ENCODE measurements at regions of chr17 and their contacts with region 1.

Region 1: GRCh38 chr17:28763804-28764266 is 20.0 kb downstream of the TRAF4 start:
- DNase-seq: peak in 1 of 2 experiments; percentile 84
- H3K4me3 ChIP-seq: no peak overlapping the region
- H3K27ac ChIP-seq: no peak overlapping the region
- H3K4me1 ChIP-seq: peaks cover 9 to 25% (median 18%) of the 10 kb centered on the region in 4 experiments
- H3K27me3 ChIP-seq: no peaks in the 10 kb centered on the region
- CTCF ChIP-seq: peak in 2 of 3 experiments; percentile 62 to 81; a peak in 3 of 4 replicates
- EP300 ChIP-seq: no peak
- POLR2A ChIP-seq: no peak
- RAD21 ChIP-seq: peak; percentile 63 to 72

Region 2: GRCh38 chr17:28693869-28694268 is 70.0 kb before region 1 on chr17:
- CTCF ChIA-PET with region 1: no interaction called
- POLR2A ChIA-PET with region 1: no interaction called
- DNase-seq: no peak
- H3K4me3 ChIP-seq: no peak overlapping the region
- H3K27ac ChIP-seq: no peak overlapping the region
- H3K4me1 ChIP-seq: no peaks in the 10 kb centered on the region
- H3K27me3 ChIP-seq: no peaks in the 10 kb centered on the region
- CTCF ChIP-seq: no peak
- EP300 ChIP-seq: no peak
- POLR2A ChIP-seq: no peak
- RAD21 ChIP-seq: no peak

Region 3: DNA sequence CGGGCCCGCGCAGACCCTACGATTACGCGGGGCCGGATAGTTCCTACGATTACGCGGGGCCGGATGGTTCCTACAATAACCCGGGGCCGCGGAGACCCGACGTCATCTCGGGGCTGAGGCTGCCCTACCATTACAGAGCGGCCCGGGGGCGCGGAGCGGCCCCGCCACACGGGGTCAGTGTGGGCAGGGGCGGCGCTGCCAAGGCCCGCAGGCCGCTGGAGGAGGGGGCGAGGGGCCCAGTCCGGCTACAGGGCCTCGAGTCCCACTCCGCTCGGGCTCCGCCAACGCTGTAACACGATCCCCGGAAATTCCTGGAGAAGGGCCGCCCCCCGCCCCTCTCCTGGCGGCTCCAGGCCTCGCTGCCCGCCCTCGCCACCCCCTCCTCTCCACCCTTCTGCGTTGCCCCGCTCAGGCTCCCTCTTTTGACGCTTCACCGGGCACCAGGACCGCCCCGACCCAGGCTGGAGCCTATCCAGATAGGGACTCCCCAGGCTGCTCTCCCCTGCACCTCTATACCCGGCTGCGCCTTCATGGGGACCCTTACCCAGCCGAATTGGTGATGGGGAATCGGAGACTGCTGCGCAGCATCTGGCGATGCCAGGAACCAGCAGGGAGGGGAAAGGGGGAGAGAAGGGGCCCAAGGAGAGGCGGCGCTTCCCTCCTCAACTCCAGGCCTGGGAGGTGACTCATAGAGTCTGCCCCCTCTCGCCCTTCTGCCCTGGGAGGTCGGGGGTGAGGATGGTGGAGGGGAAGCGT is 46.1 kb before region 1 on chr17 and contains the start of gene RAB34:
- CTCF ChIA-PET with region 1: interaction called, 3 read pairs
- POLR2A ChIA-PET with region 1: interaction called, 10 read pairs
- DNase-seq: peak; percentile 80 to 92
- H3K4me3 ChIP-seq: peak within 1 kb of the TSS; percentile 95 to 100 (median 98)
- H3K27ac ChIP-seq: peak within 1 kb of the TSS; percentile 77
- H3K4me1 ChIP-seq: peaks cover 4 to 14% (median 8%) of the 10 kb centered on the region in 4 experiments
- H3K27me3 ChIP-seq: no peaks in the 10 kb centered on the region
- CTCF ChIP-seq: peak; percentile 42 to 63 (median 61)
- EP300 ChIP-seq: peak in 1 of 2 experiments; percentile 18; a peak in 1 of 3 replicates
- POLR2A ChIP-seq: peak; percentile 48 to 78
- RAD21 ChIP-seq: peak in 1 of 2 experiments; percentile 12; a peak in 1 of 4 replicates
- total RNA-seq, gene RAB34: 236 and 237 TPM in 2 replicates

Region 4: DNA sequence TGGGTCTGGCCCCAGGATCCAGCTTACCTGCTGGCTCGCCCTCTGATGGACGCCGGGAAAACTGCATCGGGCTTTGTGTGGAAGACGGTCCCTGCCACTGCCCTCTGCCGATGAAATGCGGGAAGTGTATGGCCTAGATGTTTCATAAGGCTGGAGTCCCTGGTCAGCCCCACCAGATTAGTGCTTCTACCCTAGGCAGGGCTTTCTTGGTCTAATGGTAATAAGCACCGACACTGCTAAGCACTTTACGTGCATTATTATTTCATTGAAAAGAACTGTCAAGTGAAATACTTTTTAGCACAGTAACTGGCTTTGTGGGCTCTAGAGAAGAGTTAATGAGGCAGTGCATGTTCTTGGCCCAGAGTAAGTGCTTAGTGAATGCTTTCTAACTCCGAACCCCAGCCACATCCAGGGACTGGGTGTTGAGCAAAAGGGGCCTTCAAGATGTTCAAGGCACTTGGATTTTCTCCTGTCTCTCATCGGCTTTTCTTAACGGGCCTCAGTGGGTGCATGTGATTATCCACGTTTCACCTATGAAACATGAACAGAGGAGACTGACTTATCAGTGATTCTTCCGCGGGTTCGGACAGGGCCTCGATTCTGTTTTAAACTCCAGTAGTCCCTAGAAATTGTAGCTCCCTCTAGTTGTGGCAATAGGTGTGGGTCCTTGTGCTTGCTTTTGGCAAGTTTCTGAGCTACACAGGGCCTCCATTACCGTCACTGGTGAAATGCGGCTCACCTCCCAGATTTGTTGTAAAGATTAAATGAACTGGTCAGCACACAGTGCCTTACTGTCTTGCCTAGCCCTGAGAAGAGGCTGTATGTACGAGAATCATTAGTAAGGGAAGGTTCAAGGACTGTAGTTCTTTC is 13.4 kb before region 1 on chr17:
- CTCF ChIA-PET with region 1: interaction called, 134 read pairs
- POLR2A ChIA-PET with region 1: interaction called, 240 read pairs
- DNase-seq: peak in 1 of 2 experiments; percentile 96
- H3K4me3 ChIP-seq: no peak overlapping the region
- H3K27ac ChIP-seq: no peak overlapping the region
- H3K4me1 ChIP-seq: peaks cover 0 to 30% (median 24%) of the 10 kb centered on the region in 4 experiments; a peak in 6 of 7 replicates
- H3K27me3 ChIP-seq: no peaks in the 10 kb centered on the region
- CTCF ChIP-seq: peak; percentile 98 to 100 (median 100)
- EP300 ChIP-seq: 0 out of 3 replicates have a peak, but pooled peaks of 1 of the 2 experiments have one; percentile 5
- POLR2A ChIP-seq: peak in 1 of 2 experiments; percentile 73; a peak in 2 of 3 replicates
- RAD21 ChIP-seq: peak; percentile 71 to 81

Region 5: GRCh38 chr17:28792877-28793661 is 29.2 kb after region 1 on chr17:
- CTCF ChIA-PET with region 1: interaction called, 13 read pairs
- POLR2A ChIA-PET with region 1: interaction called, 3 read pairs
- DNase-seq: no peak
- H3K4me3 ChIP-seq: no peak overlapping the region
- H3K27ac ChIP-seq: no peak overlapping the region
- H3K4me1 ChIP-seq: no peaks in the 10 kb centered on the region
- H3K27me3 ChIP-seq: no peaks in the 10 kb centered on the region
- CTCF ChIP-seq: no peak
- EP300 ChIP-seq: no peak
- POLR2A ChIP-seq: no peak
- RAD21 ChIP-seq: no peak

Region 6: GRCh38 chr17:28842282-28843012 is 78.6 kb after region 1 on chr17 and contains the start of gene FAM222B:
- CTCF ChIA-PET with region 1: interaction called, 32 read pairs
- POLR2A ChIA-PET with region 1: interaction called, 9 read pairs
- DNase-seq: peak; percentile 54 to 92
- H3K4me3 ChIP-seq: peak within 1 kb of the TSS; percentile 85 to 98 (median 92)
- H3K27ac ChIP-seq: peak within 1 kb of the TSS; percentile 18; the same call in 1 of the 2 replicates
- H3K4me1 ChIP-seq: peaks cover 0 to 1% (median 0%) of the 10 kb centered on the region in 4 experiments; a peak in 1 of 7 replicates
- H3K27me3 ChIP-seq: no peaks in the 10 kb centered on the region
- CTCF ChIP-seq: no peak; a peak in 1 of 4 replicates
- EP300 ChIP-seq: no peak
- POLR2A ChIP-seq: peak in 1 of 2 experiments; percentile 50; a peak in 1 of 3 replicates
- RAD21 ChIP-seq: 0 out of 4 replicates have a peak, but pooled peaks of 1 of the 2 experiments have one; percentile 7
- total RNA-seq, gene FAM222B: 81.7 and 86.6 TPM in 2 replicates

Region 7: DNA sequence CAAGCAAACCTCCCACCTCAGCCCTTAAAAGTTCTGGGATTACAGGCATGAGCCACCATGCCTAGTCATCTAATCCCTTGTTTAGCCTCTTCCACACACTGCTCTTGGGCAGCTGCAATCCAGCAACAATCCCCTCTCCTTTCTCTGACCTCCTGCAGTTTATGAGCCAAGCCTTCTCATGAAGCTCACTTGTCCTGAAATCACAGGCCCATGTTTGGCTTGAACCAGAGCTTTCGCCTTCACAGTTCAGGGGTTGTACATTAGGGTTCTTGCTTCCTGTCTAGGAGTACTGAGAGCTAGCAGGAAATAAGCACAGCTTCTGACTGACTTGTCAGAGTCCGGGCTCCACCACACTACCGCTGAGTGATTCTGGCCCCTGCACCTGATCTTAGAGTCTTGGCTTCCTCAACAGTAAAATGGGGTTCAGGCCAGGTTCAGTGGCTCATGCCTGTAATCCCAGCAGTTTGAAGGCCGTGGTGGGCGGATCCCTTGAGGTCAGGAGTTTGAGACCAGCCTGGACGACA is 107.3 kb after region 1 on chr17:
- CTCF ChIA-PET with region 1: interaction called, 20 read pairs
- POLR2A ChIA-PET with region 1: no interaction called
- DNase-seq: no peak
- H3K4me3 ChIP-seq: no peak overlapping the region
- H3K27ac ChIP-seq: no peak overlapping the region
- H3K4me1 ChIP-seq: no peaks in the 10 kb centered on the region
- H3K27me3 ChIP-seq: peaks cover 0 to 4% (median 0%) of the 10 kb centered on the region in 4 experiments; a peak in 2 of 7 replicates
- CTCF ChIP-seq: no peak
- EP300 ChIP-seq: no peak
- POLR2A ChIP-seq: no peak
- RAD21 ChIP-seq: no peak

Region 8: DNA sequence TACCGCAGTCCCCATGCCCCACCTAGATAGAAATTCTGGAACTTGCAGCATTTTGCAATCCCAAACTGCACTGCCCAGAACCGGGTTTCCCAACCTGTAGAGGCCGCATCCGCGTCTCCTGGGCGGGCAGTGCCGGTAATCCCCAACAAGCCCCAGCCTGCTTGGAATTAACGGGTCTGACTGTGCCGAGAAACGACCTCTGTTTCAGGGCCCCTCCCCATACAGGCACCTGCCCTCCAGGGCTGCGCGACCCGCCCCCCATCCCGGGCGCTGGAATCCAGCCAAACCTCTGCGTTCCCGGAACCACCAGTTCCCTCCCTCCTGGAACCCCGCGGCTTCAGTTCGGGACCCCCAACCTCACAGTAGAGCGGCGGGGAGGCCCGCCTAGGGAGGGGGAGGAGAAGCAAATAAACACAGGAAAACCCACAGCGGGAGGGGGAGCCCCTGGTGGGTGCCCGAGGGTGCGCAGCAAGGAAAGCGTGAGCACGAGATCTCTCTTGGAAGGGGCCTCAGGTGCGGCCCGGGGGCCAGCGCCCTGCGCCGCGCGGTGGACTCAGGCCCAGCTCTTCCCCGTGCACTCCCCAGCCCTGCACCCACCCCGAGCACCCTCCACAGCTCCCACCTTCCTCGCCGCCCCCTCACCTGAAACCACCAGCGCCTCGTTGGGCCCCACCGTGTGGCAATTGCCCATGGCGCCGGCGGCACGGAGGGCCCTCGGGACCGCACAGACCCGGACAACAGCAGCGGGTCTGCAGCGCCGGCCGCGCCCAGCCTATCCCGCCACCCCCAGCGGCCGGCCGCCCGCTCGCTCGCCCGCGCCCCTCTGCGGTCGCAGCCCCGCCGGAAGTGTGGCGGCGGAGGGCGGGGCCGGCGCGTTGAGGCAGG is 133.3 kb after region 1 on chr17 and contains the start of gene FLOT2:
- CTCF ChIA-PET with region 1: interaction called, 47 read pairs
- POLR2A ChIA-PET with region 1: interaction called, 15 read pairs
- DNase-seq: peak; percentile 38 to 83
- H3K4me3 ChIP-seq: peak within 1 kb of the TSS; percentile 79 to 94 (median 89)
- H3K27ac ChIP-seq: peak within 1 kb of the TSS; percentile 68; the same call in 1 of the 2 replicates
- H3K4me1 ChIP-seq: peaks cover 2 to 18% (median 8%) of the 10 kb centered on the region in 4 experiments
- H3K27me3 ChIP-seq: no peaks in the 10 kb centered on the region
- CTCF ChIP-seq: peak in 2 of 3 experiments; percentile 14 to 33; a peak in 3 of 4 replicates
- EP300 ChIP-seq: no peak; a peak in 1 of 3 replicates
- POLR2A ChIP-seq: peak; percentile 56 to 75; a peak in 2 of 3 replicates
- RAD21 ChIP-seq: no peak
- total RNA-seq, gene FLOT2: 116 and 121 TPM in 2 replicates